Naive thymus-derived CD8-positive, alpha-beta T cell (primary cell): ENCODE measurements at regions of chr19 and their contacts with region 1.

Region 1: DNA sequence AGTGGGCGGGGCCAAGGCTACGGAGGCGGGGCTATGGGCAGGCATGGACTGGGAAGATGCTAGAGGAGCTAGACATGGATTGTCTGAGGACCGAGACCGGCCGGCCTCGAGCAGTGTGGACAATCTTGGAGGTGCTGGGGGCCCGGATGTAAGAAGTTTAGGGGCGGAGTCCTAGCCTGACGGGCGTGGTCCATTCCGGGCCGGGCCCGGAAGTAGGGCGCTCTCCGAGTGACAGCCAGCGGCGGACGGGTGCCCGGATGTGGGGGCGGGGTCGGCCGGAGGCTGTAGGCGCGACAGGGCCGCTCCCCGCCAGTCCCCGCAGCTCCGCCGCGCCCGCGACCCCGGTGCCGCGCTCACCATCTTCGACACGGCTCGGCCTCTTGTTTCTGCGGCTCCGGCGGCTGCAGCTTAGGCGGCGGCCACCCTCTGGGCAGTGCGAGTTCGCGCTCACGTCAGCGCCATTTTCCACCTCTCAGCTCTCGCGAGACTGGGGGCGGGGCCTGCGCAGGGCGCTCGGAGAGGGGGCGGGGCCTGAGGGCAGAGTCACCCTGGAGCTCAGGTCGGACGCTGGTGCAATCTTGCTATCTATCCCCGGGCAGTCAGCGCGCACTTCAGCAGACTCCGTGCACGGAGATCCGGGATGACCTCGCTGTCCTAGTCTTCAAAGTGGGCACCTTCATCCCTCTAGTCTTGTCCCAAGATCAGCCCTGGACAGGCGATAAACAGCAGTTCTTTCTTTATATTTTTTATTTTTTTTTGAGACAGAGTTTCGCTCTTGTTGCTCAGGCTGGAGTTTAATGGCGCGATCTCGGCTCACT is at the start of gene ZNF414:
- DNase-seq: peak; percentile 91 to 100 (median 97)
- ATAC-seq: peak; percentile 75 to 78
- H3K4me3 Mint-ChIP-seq: peak within 1 kb of the TSS; percentile 90 to 98 (median 96)
- H3K27ac Mint-ChIP-seq: peak within 1 kb of the TSS; percentile 94 to 99 (median 98)
- H3K4me1 Mint-ChIP-seq: peaks cover 25 to 62% (median 60%) of the 10 kb centered on the region in 4 donors
- H3K27me3 Mint-ChIP-seq: no peaks in the 10 kb centered on the region
- polyA plus RNA-seq, gene ZNF414: 15.2 to 34.2 (median 27.7) TPM

Region 2: DNA sequence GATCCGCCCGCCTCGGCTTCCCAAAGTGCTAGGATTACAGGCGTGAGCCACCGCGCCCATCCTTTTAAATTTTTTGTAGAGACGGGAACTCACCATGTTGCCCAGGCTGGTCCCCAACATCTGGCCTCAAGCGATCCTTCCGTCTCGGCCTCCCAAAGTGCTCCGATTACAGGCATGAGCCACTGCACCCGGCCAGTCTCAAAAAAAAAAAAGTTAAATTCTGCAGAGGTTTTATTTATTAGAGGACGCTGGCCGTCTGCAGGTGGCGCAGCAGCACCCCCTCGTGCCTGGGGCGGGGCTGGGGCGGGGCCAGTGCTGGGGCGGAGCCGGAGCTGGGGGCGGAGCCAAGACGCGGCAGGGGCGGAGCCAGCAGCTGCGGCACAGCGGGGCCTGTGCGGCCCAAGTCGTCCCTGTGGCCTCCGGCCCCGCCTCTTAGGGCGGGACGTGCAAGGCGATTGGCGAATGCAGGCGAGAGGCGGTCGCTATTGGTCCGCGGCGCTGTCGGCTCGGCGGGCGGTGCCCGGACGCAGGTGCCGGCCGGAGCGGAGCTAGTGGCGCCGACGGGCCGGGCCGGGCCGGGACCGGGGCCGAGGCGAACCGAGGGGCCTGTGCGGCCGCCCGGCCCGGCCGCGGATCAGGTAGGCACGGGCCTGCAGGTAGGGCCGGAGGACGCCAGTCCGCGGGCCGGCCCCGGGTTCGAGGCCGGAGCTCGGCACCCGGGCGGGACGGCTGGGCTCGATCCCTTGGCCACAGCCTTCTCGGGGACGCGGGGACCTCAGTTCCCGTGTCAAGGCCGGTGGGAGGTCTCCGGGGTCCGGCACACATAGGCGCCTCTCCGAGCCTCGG is 100.9 kb before region 1 on chr19 and contains the start of gene MARCHF2:
- POLR2A ChIA-PET with region 1: interaction called, 21 read pairs
- DNase-seq: peak; percentile 88 to 97 (median 94)
- ATAC-seq: peak; percentile 99 to 100
- H3K4me3 Mint-ChIP-seq: peak within 1 kb of the TSS; percentile 57 to 85 (median 74)
- H3K27ac Mint-ChIP-seq: peak within 1 kb of the TSS in 7 of 10 donors; percentile 19 to 71 (median 65)
- H3K4me1 Mint-ChIP-seq: peaks cover 3 to 19% (median 7%) of the 10 kb centered on the region in 4 donors
- H3K27me3 Mint-ChIP-seq: no peaks in the 10 kb centered on the region
- polyA plus RNA-seq, gene MARCHF2: 21.1 to 40.1 (median 38.2) TPM

Region 3: GRCh38 chr19:8481201-8481600 is 32.7 kb before region 1 on chr19:
- POLR2A ChIA-PET with region 1: interaction called, 17 read pairs
- DNase-seq: peak in 2 of 10 donors; percentile 29 to 30
- ATAC-seq: peak; percentile 53 to 71
- H3K4me3 Mint-ChIP-seq: peak overlapping the region; percentile 27 to 82 (median 72)
- H3K27ac Mint-ChIP-seq: peak overlapping the region; percentile 75 to 93 (median 87)
- H3K4me1 Mint-ChIP-seq: peaks cover 33 to 76% (median 67%) of the 10 kb centered on the region in 4 donors
- H3K27me3 Mint-ChIP-seq: no peaks in the 10 kb centered on the region

Region 4: DNA sequence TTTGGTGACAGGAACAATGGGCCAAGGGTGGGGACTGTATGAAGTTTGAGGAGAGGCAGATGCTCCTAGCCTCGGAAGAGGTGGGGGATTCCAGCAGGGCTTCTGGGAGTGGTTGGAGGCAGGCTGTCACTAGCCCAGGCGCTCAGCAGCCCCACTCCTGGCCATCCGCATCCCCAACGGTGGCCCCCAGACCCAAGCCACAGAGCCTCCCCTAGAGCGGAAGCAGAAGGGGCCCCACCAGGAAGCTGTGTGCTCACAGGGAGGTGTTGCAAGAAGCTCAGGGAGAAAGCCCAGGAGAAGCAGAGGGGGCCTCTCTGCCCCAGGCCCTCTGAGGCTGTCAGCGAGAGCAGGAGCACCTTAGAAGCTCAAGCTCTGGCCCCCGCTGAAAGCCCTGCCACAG is 19.7 kb before region 1 on chr19:
- POLR2A ChIA-PET with region 1: interaction called, 37 read pairs
- DNase-seq: peak in 2 of 10 donors; percentile 33 to 54
- ATAC-seq: peak; percentile 56 to 60
- H3K4me3 Mint-ChIP-seq: peak overlapping the region in 9 of 10 donors; percentile 7 to 69 (median 42)
- H3K27ac Mint-ChIP-seq: peak overlapping the region; percentile 66 to 90 (median 84)
- H3K4me1 Mint-ChIP-seq: peaks cover 20 to 42% (median 26%) of the 10 kb centered on the region in 4 donors
- H3K27me3 Mint-ChIP-seq: no peaks in the 10 kb centered on the region

Region 5: GRCh38 chr19:8580710-8581281 is 66.9 kb after region 1 on chr19:
- POLR2A ChIA-PET with region 1: interaction called, 802 read pairs
- DNase-seq: peak; percentile 74 to 92 (median 86)
- ATAC-seq: peak; percentile 53 to 70
- H3K4me3 Mint-ChIP-seq: no peak overlapping the region
- H3K27ac Mint-ChIP-seq: peak overlapping the region in 2 of 10 donors; percentile 68 to 69
- H3K4me1 Mint-ChIP-seq: peaks cover 18 to 49% (median 41%) of the 10 kb centered on the region in 4 donors
- H3K27me3 Mint-ChIP-seq: no peaks in the 10 kb centered on the region